ENCODE measurements at regions of chr19 and their contacts with region 1.

Region 1: GRCh38 chr19:50414864-50415660 is 3.7 kb upstream of the SPIB start:
- DNase-seq: peak; percentile 87 to 92 (median 90)
- ATAC-seq: peak; percentile 95
- H3K4me3 ChIP-seq: no peak overlapping the region
- H3K27ac ChIP-seq: peak overlapping the region; percentile 67
- H3K4me1 ChIP-seq: peaks cover 13 to 69% of the 10 kb centered on the region in 2 experiments
- H3K27me3 ChIP-seq: no peaks in the 10 kb centered on the region
- CTCF ChIP-seq: peak; percentile 87 to 95 (median 89)
- EP300 ChIP-seq: no peak
- POLR2A ChIP-seq: peak; percentile 26
- RAD21 ChIP-seq: peak; percentile 69 to 84

Region 2: DNA sequence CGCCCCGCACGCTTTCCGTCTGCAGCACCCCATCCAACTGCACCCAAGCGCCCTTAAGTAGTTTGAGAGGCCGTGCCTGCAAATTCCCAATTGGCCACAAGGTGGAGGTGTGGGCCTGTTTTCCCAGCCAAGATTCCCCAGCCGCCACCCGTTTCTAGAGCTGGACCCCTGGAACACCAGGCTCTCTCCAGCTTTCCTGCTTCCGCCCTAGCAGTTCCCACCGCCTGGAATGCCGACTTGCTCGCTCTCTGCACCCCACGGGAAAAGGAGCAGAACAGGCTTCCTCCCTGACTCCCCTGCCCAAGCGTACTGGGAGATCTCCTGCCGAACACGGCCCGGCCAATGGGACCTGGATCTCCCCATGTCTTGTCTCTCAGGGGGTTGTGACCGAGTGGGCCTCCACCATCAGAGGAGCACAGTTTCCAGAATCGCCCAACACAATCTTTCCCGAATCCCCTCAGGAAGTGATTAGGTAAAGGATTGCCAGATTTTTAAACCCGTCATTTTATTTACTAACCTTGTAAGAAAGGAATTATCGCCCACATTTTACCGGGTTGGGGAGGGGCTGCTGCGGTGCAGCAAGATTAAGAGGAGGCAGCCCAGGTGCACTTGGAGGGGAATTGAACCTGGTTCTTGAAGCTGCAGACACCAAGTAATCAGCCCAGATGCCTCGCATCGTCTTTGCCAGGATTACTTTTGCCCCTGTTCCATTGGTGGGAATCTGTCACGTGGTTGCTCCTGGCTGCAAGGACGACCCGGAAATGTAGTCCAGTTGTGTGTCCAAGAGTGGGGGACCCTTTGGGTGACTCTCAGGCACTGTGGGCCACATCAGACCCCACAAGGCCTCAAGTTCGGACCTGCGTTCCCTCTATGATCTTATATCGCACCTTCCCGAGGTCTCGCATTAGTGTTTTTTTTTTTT is 46.2 kb before region 1 on chr19:
- CTCF ChIA-PET with region 1: interaction called, 13 read pairs
- POLR2A ChIA-PET with region 1: interaction called, 3 read pairs
- in situ Hi-C with region 1: no loop called
- intact Hi-C with region 1: loop called (anchors 2 kb)
- DNase-seq: peak; percentile 87 to 93 (median 90)
- ATAC-seq: peak; percentile 82
- H3K4me3 ChIP-seq: peak overlapping the region; percentile 49
- H3K27ac ChIP-seq: peak overlapping the region; percentile 78
- H3K4me1 ChIP-seq: peaks cover 27 to 49% of the 10 kb centered on the region in 2 experiments
- H3K27me3 ChIP-seq: no peaks in the 10 kb centered on the region
- CTCF ChIP-seq: peak; percentile 86 to 88 (median 88)
- EP300 ChIP-seq: no peak
- POLR2A ChIP-seq: peak; percentile 68
- RAD21 ChIP-seq: peak; percentile 82 to 88